T-cell (primary cell): ENCODE measurements at regions of chr7 and their contacts with region 1.

Region 1: GRCh38 chr7:73578342-73579127 is at the start of gene TBL2:
- DNase-seq: peak; percentile 97 to 99 (median 99)
- ATAC-seq: peak; percentile 89 to 96 (median 90)
- H3K4me3 ChIP-seq: peak within 1 kb of the TSS; percentile 85 to 90
- H3K4me3 Mint-ChIP-seq: peak within 1 kb of the TSS; percentile 94 to 99 (median 95)
- H3K27ac ChIP-seq: peak within 1 kb of the TSS; percentile 84
- H3K27ac Mint-ChIP-seq: peak within 1 kb of the TSS; percentile 99 to 100
- H3K4me1 ChIP-seq: peaks cover 10 to 27% of the 10 kb centered on the region in 2 experiments
- H3K4me1 Mint-ChIP-seq: peaks cover 17 to 31% (median 27%) of the 10 kb centered on the region in 3 donors
- H3K27me3 ChIP-seq: no peaks in the 10 kb centered on the region
- H3K27me3 Mint-ChIP-seq: no peaks in the 10 kb centered on the region
- total RNA-seq, gene TBL2: 14.8 to 38.5 (median 31.6) TPM

Region 2: GRCh38 chr7:73565675-73566340 is 12.7 kb before region 1 on chr7:
- CTCF ChIA-PET with region 1: interaction called in 1 of 2 experiments, 6 read pairs
- POLR2A ChIA-PET with region 1: interaction called, 9 to 17 read pairs
- DNase-seq: peak in 1 of 35 experiments; percentile 25
- ATAC-seq: peak; percentile 32 to 37 (median 33)
- H3K4me3 ChIP-seq: peak overlapping the region in 1 of 2 donors; percentile 51
- H3K4me3 Mint-ChIP-seq: peak overlapping the region; percentile 67 to 82 (median 77)
- H3K27ac ChIP-seq: peak overlapping the region; percentile 56
- H3K27ac Mint-ChIP-seq: peak overlapping the region; percentile 81 to 82
- H3K4me1 ChIP-seq: peaks cover 0 to 10% of the 10 kb centered on the region in 2 experiments
- H3K4me1 Mint-ChIP-seq: peaks cover 26 to 31% (median 30%) of the 10 kb centered on the region in 3 donors
- H3K27me3 ChIP-seq: no peaks in the 10 kb centered on the region
- H3K27me3 Mint-ChIP-seq: no peaks in the 10 kb centered on the region